Heart right ventricle (tissue), 16 donors: ENCODE measurements at regions of chr16 and their contacts with region 1.

Region 1: GRCh38 chr16:46748775-46749705 is 896 bp upstream of the MYLK3 start:
- DNase-seq: peak; percentile 74 to 78
- ATAC-seq: peak; percentile 48 to 83 (median 74)
- H3K4me3 ChIP-seq: peak overlapping the region in 5 of 10 donors; percentile 19 to 70 (median 55)
- H3K27ac ChIP-seq: peak overlapping the region; percentile 87 to 99 (median 94)
- H3K4me1 ChIP-seq: peaks cover 0 to 48% (median 20%) of the 10 kb centered on the region in 9 donors
- H3K27me3 ChIP-seq: no peaks in the 10 kb centered on the region
- CTCF ChIP-seq: no peak

Region 2: DNA sequence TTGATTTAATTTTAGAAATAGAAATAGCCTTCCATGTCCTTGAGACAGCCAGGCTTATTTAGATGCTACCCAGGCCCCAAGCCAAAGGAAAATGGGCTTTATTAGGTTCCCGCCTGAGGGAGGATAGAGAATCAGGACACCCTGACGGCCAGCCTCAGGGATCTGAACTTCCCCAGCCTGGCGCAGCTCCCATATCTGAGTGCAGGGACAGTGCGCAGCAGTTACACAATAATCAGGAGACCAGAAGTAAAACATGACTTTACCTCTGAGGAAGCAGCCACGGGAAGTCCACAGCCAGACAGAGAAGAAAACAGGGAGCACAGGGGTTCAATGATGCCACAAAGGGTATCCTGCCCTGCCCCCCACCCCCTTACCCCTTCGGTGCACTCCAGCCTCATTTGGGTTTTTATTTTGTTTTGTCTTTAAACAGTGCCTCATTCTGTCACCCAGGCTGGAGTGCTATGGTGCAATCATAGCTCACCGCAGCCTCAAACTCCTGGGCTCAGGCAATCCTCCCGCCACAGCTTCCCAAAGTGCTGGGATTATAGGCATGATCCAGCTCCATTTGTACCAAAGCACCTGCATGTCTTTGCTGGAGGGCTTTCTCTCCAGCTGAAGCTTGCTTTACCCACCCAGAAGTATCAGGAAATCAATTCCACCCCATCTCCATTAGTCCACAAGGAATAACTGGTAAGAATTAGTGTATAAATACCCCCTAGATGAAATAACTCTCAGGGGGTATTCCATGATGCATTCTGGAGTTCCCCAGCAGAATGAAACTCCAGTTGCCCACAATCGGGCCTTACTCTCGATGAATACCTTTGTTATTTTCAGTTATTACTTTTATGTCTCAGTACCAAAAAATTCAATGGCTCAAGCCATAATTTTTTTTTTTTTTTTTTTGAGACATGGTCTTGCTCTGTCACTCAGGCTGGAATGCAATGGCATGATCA is 37.7 kb before region 1 on chr16:
- intact Hi-C with region 1: loop called in 1 of 10 experiments (anchors 5 kb)
- DNase-seq: peak; percentile 66 to 69
- ATAC-seq: peak; percentile 57 to 85 (median 78)
- H3K4me3 ChIP-seq: no peak overlapping the region
- H3K27ac ChIP-seq: peak overlapping the region; percentile 12 to 80 (median 70)
- H3K4me1 ChIP-seq: peaks cover 13 to 62% (median 50%) of the 10 kb centered on the region in 9 donors
- H3K27me3 ChIP-seq: no peaks in the 10 kb centered on the region
- CTCF ChIP-seq: no peak

Region 3: GRCh38 chr16:46774743-46775177 is 25.7 kb after region 1 on chr16:
- intact Hi-C with region 1: no loop called
- DNase-seq: no peak
- ATAC-seq: no peak
- H3K4me3 ChIP-seq: no peak overlapping the region
- H3K27ac ChIP-seq: no peak overlapping the region
- H3K4me1 ChIP-seq: peaks cover 0 to 12% (median 0%) of the 10 kb centered on the region in 9 donors
- H3K27me3 ChIP-seq: no peaks in the 10 kb centered on the region
- CTCF ChIP-seq: no peak

Region 4: GRCh38 chr16:46808997-46809396 is 60.0 kb after region 1 on chr16:
- intact Hi-C with region 1: no loop called
- DNase-seq: no peak
- ATAC-seq: no peak
- H3K4me3 ChIP-seq: no peak overlapping the region
- H3K27ac ChIP-seq: peak overlapping the region in 1 of 10 donors; percentile 60
- H3K4me1 ChIP-seq: peaks cover 0 to 22% (median 16%) of the 10 kb centered on the region in 9 donors
- H3K27me3 ChIP-seq: no peaks in the 10 kb centered on the region
- CTCF ChIP-seq: no peak

Region 5: GRCh38 chr16:46947900-46948547 is 199.0 kb after region 1 on chr16:
- intact Hi-C with region 1: no loop called
- DNase-seq: no peak
- ATAC-seq: peak in 3 of 8 donors; percentile 16 to 40 (median 33)
- H3K4me3 ChIP-seq: no peak overlapping the region
- H3K27ac ChIP-seq: no peak overlapping the region
- H3K4me1 ChIP-seq: no peaks in the 10 kb centered on the region
- H3K27me3 ChIP-seq: no peaks in the 10 kb centered on the region
- CTCF ChIP-seq: peak in 8 of 9 donors; percentile 16 to 57 (median 48)